Ascending aorta (tissue), 2 donors: ENCODE measurements at regions of chr16 and their contacts with region 1.

Region 1: DNA sequence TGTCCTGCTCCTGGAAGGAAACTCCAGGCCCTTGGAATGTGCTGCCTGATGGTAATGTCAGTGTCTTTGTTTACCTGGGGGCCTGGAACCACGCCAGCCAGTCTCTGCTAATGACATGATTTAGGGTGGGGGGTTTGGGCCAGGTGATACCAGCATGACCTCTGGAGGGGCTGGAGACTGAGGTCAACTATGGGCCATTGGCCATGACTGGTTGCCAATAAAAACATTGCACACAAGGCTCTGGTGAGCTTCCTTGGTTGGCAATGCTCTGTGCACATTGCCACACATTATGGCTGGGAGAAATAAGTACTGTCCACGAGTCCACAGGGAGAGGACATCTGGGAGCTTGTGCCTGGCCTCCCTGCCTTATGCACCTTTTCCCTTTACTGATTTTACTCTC is 52.5 kb downstream of the LITAF start:
- DNase-seq: no peak
- H3K4me3 ChIP-seq: no peak overlapping the region
- H3K27ac ChIP-seq: no peak overlapping the region
- H3K4me1 ChIP-seq: no peaks in the 10 kb centered on the region
- H3K27me3 ChIP-seq: no peaks in the 10 kb centered on the region
- CTCF ChIP-seq: no peak

Region 2: GRCh38 chr16:11715246-11715947 is 181.1 kb after region 1 on chr16:
- intact Hi-C with region 1: loop called (anchors 2 kb)
- DNase-seq: no peak
- H3K4me3 ChIP-seq: no peak overlapping the region
- H3K27ac ChIP-seq: no peak overlapping the region
- H3K4me1 ChIP-seq: no peaks in the 10 kb centered on the region
- H3K27me3 ChIP-seq: no peaks in the 10 kb centered on the region
- CTCF ChIP-seq: no peak